Caco-2 (cell line): ENCODE measurements at regions of chr6 and their contacts with region 1.

Region 1: GRCh38 chr6:53811082-53811481 is 16.3 kb downstream of the LRRC1 start:
- DNase-seq: peak; percentile 62 to 71
- H3K4me3 ChIP-seq: no peak overlapping the region
- H3K4me3 Mint-ChIP-seq: no peak overlapping the region
- H3K27ac Mint-ChIP-seq: peak overlapping the region; percentile 37
- H3K4me1 ChIP-seq: peaks cover 43% of the 10 kb centered on the region
- H3K4me1 Mint-ChIP-seq: peaks cover 26% of the 10 kb centered on the region
- H3K27me3 ChIP-seq: no peaks in the 10 kb centered on the region
- H3K27me3 Mint-ChIP-seq: no peaks in the 10 kb centered on the region
- CTCF ChIP-seq: no peak

Region 2: GRCh38 chr6:53446151-53446550 is 364.9 kb before region 1 on chr6:
- CTCF ChIA-PET with region 1: no interaction called
- POLR2A ChIA-PET with region 1: no interaction called
- intact Hi-C with region 1: no loop called
- DNase-seq: no peak
- H3K4me3 ChIP-seq: no peak overlapping the region
- H3K4me3 Mint-ChIP-seq: no peak overlapping the region
- H3K27ac Mint-ChIP-seq: no peak overlapping the region
- H3K4me1 ChIP-seq: no peaks in the 10 kb centered on the region
- H3K4me1 Mint-ChIP-seq: no peaks in the 10 kb centered on the region
- H3K27me3 ChIP-seq: no peaks in the 10 kb centered on the region; the same call in 1 of the 2 replicates
- H3K27me3 Mint-ChIP-seq: peaks cover 5% of the 10 kb centered on the region
- CTCF ChIP-seq: no peak

Region 3: DNA sequence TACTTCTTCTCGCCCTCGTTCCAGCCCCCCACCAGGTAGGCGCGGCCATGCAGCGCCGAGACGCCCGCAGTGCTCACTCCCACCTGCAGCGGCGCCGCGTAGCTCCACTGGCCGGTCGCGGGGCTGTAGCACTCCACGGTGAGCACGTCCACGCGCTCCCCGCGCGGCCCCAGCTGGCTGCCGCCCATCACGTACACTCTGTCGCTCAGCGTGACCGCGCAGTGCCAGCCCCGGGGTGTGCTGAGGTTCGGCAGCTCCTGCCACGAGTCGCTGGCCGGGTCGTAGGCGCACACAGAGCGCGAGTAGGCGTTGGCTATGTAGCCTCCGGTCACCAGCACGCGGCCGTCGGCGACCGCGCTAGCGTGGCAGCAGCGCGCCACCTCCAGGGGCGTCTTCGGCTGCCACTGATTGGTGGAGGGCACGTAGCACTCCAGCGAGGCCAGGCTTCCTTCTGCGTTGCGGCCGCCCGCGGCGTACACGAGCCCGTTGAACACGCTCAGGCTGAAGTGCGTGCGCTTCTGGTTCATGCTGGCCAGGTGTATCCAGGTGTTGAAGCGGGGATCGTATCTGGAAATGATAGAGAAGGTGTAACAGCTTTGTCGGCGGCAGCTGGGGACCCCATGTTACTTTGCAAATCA is 159.2 kb before region 1 on chr6:
- CTCF ChIA-PET with region 1: no interaction called
- POLR2A ChIA-PET with region 1: no interaction called
- intact Hi-C with region 1: no loop called
- DNase-seq: peak; percentile 92 to 94
- H3K4me3 ChIP-seq: peak overlapping the region; percentile 53
- H3K4me3 Mint-ChIP-seq: peak overlapping the region; percentile 99
- H3K27ac Mint-ChIP-seq: peak overlapping the region; percentile 99
- H3K4me1 ChIP-seq: peaks cover 6% of the 10 kb centered on the region; the same call in 1 of the 2 replicates
- H3K4me1 Mint-ChIP-seq: peaks cover 10% of the 10 kb centered on the region
- H3K27me3 ChIP-seq: no peaks in the 10 kb centered on the region
- H3K27me3 Mint-ChIP-seq: no peaks in the 10 kb centered on the region
- CTCF ChIP-seq: peak; percentile 49 to 54

Region 4: GRCh38 chr6:53829698-53830221 is 18.7 kb after region 1 on chr6:
- CTCF ChIA-PET with region 1: no interaction called
- POLR2A ChIA-PET with region 1: no interaction called
- intact Hi-C with region 1: loop called (anchors 2 kb)
- DNase-seq: peak; percentile 35 to 56
- H3K4me3 ChIP-seq: no peak overlapping the region
- H3K4me3 Mint-ChIP-seq: peak overlapping the region; percentile 52
- H3K27ac Mint-ChIP-seq: peak overlapping the region; percentile 27
- H3K4me1 ChIP-seq: peaks cover 87% of the 10 kb centered on the region
- H3K4me1 Mint-ChIP-seq: peaks cover 61% of the 10 kb centered on the region
- H3K27me3 ChIP-seq: no peaks in the 10 kb centered on the region
- H3K27me3 Mint-ChIP-seq: no peaks in the 10 kb centered on the region
- CTCF ChIP-seq: no peak

Region 5: GRCh38 chr6:53846250-53846649 is 35.2 kb after region 1 on chr6:
- CTCF ChIA-PET with region 1: no interaction called
- POLR2A ChIA-PET with region 1: interaction called, 3 read pairs
- intact Hi-C with region 1: loop called (anchors 5 kb)
- DNase-seq: no peak
- H3K4me3 ChIP-seq: no peak overlapping the region
- H3K4me3 Mint-ChIP-seq: no peak overlapping the region
- H3K27ac Mint-ChIP-seq: no peak overlapping the region
- H3K4me1 ChIP-seq: no peaks in the 10 kb centered on the region
- H3K4me1 Mint-ChIP-seq: no peaks in the 10 kb centered on the region
- H3K27me3 ChIP-seq: no peaks in the 10 kb centered on the region
- H3K27me3 Mint-ChIP-seq: no peaks in the 10 kb centered on the region
- CTCF ChIP-seq: no peak